ENCODE measurements at regions of chr1 and their contacts with region 1.

Region 1: DNA sequence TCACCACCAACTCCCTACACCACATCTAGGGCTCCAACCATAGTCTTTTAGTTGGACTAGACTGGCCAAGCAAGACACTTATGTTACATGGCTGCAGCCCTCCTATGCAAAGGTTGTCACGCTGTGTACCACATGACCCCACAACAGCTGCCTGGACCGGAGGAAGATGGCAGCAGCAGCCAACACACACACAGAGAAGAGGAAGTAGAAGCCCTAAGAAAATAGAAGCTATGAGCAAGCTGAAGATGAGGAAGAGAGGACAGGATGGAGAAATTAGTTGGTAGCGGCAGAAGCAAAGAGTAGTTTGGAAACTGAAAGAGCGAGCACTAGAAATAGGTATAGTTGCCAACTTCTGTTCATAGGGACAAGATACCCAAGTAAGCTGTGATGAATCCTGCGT is 60.8 kb upstream of the RALGPS2 start:
- DNase-seq: peak; percentile 82
- ATAC-seq: peak; percentile 89
- H3K4me3 ChIP-seq: peak overlapping the region in 2 of 5 experiments; percentile 13 to 17
- H3K4me3 Mint-ChIP-seq: peak overlapping the region; percentile 47
- H3K27ac ChIP-seq: peak overlapping the region; percentile 70 to 84
- H3K27ac Mint-ChIP-seq: peak overlapping the region; percentile 84
- H3K4me1 ChIP-seq: peaks cover 80 to 92% of the 10 kb centered on the region in 2 donors
- H3K4me1 Mint-ChIP-seq: peaks cover 83% of the 10 kb centered on the region
- H3K27me3 ChIP-seq: no peaks in the 10 kb centered on the region
- H3K27me3 Mint-ChIP-seq: no peaks in the 10 kb centered on the region
- CTCF ChIP-seq: no peak

Region 2: DNA sequence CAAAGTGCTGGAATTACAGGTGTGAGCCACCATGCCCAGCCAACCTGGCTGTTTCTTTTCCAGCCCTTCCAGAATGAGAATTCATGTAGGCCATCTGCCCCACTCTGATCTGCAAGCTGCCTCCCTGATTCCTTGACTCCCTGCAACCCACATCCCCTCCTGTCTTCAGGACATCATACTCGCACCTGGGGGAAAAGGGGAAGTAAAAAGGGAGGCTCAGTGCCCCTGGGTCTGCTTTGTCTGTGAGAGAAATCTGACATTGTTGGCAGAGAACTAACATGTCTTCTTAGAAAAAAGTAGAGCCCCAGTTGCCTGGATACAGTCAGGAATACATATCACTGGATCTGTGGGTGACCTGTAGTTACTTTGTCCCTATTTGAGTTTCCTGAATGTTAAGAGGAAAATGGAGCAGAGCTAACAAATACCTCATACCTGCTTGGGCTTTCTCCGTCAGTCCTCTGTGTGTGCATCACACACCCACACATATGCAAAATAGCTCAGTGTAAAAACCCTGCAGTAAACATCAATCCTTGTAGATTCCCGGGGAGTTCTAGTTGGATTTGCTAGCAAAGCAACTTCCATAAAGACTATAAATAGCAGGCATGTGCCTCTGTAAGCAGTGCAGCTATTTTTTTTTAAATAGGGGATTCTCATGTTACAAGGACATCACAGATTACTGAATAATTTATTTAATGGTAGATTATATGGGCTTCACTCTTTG is 88.5 kb before region 1 on chr1:
- CTCF ChIA-PET with region 1: interaction called, 12 read pairs
- POLR2A ChIA-PET with region 1: interaction called, 8 read pairs
- intact Hi-C with region 1: loop called (anchors 2 kb)
- DNase-seq: peak; percentile 85
- ATAC-seq: peak; percentile 36
- H3K4me3 ChIP-seq: peak overlapping the region in 3 of 5 experiments; percentile 0 to 39 (median 2)
- H3K4me3 Mint-ChIP-seq: peak overlapping the region; percentile 75
- H3K27ac ChIP-seq: peak overlapping the region; percentile 95 to 97
- H3K27ac Mint-ChIP-seq: peak overlapping the region; percentile 93
- H3K4me1 ChIP-seq: peaks cover 79 to 88% of the 10 kb centered on the region in 2 donors
- H3K4me1 Mint-ChIP-seq: peaks cover 81% of the 10 kb centered on the region
- H3K27me3 ChIP-seq: no peaks in the 10 kb centered on the region
- H3K27me3 Mint-ChIP-seq: no peaks in the 10 kb centered on the region
- CTCF ChIP-seq: no peak

Region 3: DNA sequence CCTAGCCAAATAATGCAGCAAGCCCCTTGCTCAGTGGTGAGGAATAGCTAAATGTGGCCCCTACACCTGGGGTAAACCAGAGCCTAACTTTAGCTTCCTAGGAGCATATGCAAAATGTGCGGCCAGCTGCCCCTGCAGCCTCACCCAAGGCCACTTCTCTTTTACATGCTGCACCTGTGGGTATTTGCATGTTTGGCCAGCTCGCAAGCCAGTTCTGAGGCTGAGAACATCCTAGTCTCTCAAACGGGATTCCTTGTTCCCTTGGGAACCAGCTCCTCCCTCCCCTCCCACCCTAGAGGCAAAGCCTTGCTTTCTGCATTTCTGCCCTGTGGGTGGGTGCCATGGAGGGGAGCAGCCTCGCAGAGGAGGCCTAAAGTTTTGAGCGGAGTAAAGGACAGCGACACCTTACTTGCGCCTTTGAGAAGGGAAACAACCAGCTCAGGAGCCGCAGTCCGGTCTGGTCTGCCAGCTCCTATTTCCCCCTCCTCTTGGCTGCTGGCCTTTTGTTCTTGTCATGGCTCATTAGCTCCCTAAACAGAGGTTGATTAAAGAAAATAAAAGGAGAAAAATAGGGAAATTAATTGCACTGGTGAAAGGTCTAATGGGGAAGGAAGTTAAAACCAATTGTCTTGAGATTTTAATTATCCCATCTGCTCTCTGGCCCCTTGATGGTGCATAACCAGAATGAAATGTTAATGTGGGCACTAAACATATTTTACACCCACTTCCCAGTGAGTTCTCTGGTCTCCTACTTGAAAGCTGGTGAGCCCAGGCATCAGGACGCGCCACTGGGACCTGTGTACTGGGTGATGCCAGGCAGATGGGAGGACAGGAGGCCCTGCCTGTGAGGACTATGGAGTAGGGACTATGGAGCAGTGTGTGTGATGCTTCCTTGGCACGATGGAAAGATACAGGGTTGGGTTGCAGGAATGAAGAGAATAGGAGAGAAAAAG is 82.7 kb before region 1 on chr1:
- CTCF ChIA-PET with region 1: interaction called, 12 read pairs
- POLR2A ChIA-PET with region 1: interaction called, 8 read pairs
- intact Hi-C with region 1: no loop called
- DNase-seq: peak; percentile 87
- ATAC-seq: peak; percentile 65
- H3K4me3 ChIP-seq: peak overlapping the region in 3 of 5 experiments; percentile 24 to 53 (median 29)
- H3K4me3 Mint-ChIP-seq: peak overlapping the region; percentile 70
- H3K27ac ChIP-seq: peak overlapping the region; percentile 95 to 97
- H3K27ac Mint-ChIP-seq: peak overlapping the region; percentile 95
- H3K4me1 ChIP-seq: peaks cover 91 to 92% of the 10 kb centered on the region in 2 donors
- H3K4me1 Mint-ChIP-seq: peaks cover 93% of the 10 kb centered on the region
- H3K27me3 ChIP-seq: no peaks in the 10 kb centered on the region
- H3K27me3 Mint-ChIP-seq: no peaks in the 10 kb centered on the region
- CTCF ChIP-seq: no peak

Region 4: DNA sequence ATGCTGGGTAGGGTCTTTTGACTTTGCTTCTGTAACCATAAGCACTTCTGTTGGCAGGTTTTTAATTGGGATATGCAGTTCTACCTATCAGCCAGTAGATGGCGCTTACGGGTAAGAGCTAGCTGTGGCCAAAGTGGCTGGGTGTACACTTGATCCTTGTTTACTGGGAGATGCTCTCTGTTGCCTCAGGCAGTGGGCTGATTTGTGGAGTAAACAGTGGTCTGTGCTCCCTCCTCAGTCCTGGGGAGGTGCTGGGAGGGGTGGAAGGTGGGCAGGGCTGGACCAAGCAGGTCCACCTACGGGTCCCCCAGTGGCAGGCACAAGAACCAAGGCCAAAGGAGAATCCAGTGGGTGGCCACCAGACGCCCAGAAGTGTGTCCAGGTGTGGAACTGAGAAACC is 104.1 kb after region 1 on chr1:
- CTCF ChIA-PET with region 1: no interaction called
- POLR2A ChIA-PET with region 1: no interaction called
- intact Hi-C with region 1: no loop called
- DNase-seq: peak; percentile 44
- ATAC-seq: peak; percentile 47
- H3K4me3 ChIP-seq: no peak overlapping the region
- H3K4me3 Mint-ChIP-seq: peak overlapping the region; percentile 30
- H3K27ac ChIP-seq: peak overlapping the region; percentile 0 to 17
- H3K27ac Mint-ChIP-seq: peak overlapping the region; percentile 74
- H3K4me1 ChIP-seq: peaks cover 33 to 44% of the 10 kb centered on the region in 2 donors
- H3K4me1 Mint-ChIP-seq: peaks cover 66% of the 10 kb centered on the region
- H3K27me3 ChIP-seq: no peaks in the 10 kb centered on the region
- H3K27me3 Mint-ChIP-seq: no peaks in the 10 kb centered on the region
- CTCF ChIP-seq: peak; percentile 73

Measured in B cell (primary cell).